CD4-positive, alpha-beta memory T cell (primary cell): ENCODE measurements at regions of chr11 and their contacts with region 1.

Region 1: DNA sequence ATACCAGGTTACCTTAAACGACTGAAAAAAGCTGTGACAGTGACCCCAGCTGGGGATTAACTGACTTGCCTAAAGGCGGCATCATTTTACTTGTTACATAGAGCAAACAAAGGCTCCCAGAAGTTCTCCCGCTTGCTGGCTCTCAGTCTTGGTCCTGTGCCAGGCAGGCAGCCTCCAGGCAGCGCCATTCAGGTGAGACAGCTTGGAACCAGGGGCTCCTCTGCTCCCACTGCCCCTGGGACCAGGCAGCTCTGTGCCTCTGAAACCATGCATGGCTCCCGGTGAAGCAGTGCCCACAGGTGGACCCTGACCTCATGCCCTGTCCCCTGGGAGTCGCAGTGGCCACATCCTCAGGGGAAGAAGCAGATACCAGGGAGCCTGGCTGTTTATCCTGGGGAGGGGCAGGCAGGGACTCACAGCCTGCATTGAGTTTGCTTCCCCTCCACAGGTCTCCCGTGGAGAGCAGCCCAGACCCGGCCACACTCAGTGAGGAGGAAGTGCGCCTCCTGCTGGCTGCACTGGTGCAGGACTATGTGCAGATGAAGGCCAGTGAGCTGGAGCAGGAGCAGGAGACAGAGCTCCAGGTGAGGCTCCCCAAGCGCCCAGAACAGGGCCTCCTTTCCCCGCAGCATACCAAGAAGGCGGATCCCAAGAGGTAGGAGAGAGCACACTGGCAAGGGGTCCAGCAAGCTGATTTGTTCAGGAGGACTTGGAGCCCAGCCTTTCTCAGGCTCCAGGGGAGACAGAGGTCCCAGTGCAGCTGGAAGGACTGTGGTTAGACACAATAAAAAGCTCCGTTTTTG is 15.6 kb upstream of the CYP2R1 start:
- DNase-seq: peak; percentile 74 to 81 (median 76)
- H3K4me3 ChIP-seq: no peak overlapping the region
- H3K4me3 Mint-ChIP-seq: peak overlapping the region in 4 of 8 donors; percentile 21 to 53 (median 40)
- H3K27ac ChIP-seq: no peak overlapping the region
- H3K27ac Mint-ChIP-seq: peak overlapping the region; percentile 6 to 94 (median 69)
- H3K4me1 ChIP-seq: peaks cover 29% of the 10 kb centered on the region
- H3K4me1 Mint-ChIP-seq: peaks cover 22 to 50% (median 34%) of the 10 kb centered on the region in 4 donors
- H3K27me3 ChIP-seq: no peaks in the 10 kb centered on the region
- H3K27me3 Mint-ChIP-seq: no peaks in the 10 kb centered on the region

Region 2: GRCh38 chr11:14308114-14308896 is 599.3 kb before region 1 on chr11:
- CTCF ChIA-PET with region 1: interaction called, 12 read pairs
- POLR2A ChIA-PET with region 1: no interaction called
- intact Hi-C with region 1: no loop called
- DNase-seq: peak in 4 of 5 donors; percentile 20 to 29 (median 24)
- H3K4me3 ChIP-seq: no peak overlapping the region
- H3K4me3 Mint-ChIP-seq: no peak overlapping the region
- H3K27ac ChIP-seq: no peak overlapping the region
- H3K27ac Mint-ChIP-seq: no peak overlapping the region
- H3K4me1 ChIP-seq: peaks cover 23% of the 10 kb centered on the region
- H3K4me1 Mint-ChIP-seq: peaks cover 7 to 12% (median 10%) of the 10 kb centered on the region in 4 donors
- H3K27me3 ChIP-seq: no peaks in the 10 kb centered on the region
- H3K27me3 Mint-ChIP-seq: no peaks in the 10 kb centered on the region

Region 3: GRCh38 chr11:14529933-14530332 is 377.7 kb before region 1 on chr11:
- CTCF ChIA-PET with region 1: interaction called, 57 read pairs
- POLR2A ChIA-PET with region 1: interaction called, 4 read pairs
- intact Hi-C with region 1: no loop called
- DNase-seq: no peak
- H3K4me3 ChIP-seq: no peak overlapping the region
- H3K4me3 Mint-ChIP-seq: no peak overlapping the region
- H3K27ac ChIP-seq: no peak overlapping the region
- H3K27ac Mint-ChIP-seq: peak overlapping the region in 1 of 7 donors; percentile 7
- H3K4me1 ChIP-seq: no peaks in the 10 kb centered on the region
- H3K4me1 Mint-ChIP-seq: no peaks in the 10 kb centered on the region
- H3K27me3 ChIP-seq: no peaks in the 10 kb centered on the region
- H3K27me3 Mint-ChIP-seq: no peaks in the 10 kb centered on the region

Region 4: GRCh38 chr11:14625586-14626205 is 281.9 kb before region 1 on chr11:
- CTCF ChIA-PET with region 1: interaction called, 81 read pairs
- POLR2A ChIA-PET with region 1: interaction called, 5 read pairs
- intact Hi-C with region 1: loop called (anchors 1 kb)
- DNase-seq: no peak
- H3K4me3 ChIP-seq: no peak overlapping the region
- H3K4me3 Mint-ChIP-seq: peak overlapping the region in 4 of 8 donors; percentile 40 to 59 (median 52)
- H3K27ac ChIP-seq: no peak overlapping the region
- H3K27ac Mint-ChIP-seq: peak overlapping the region in 4 of 7 donors; percentile 11 to 62 (median 51)
- H3K4me1 ChIP-seq: peaks cover 33% of the 10 kb centered on the region
- H3K4me1 Mint-ChIP-seq: peaks cover 34 to 64% (median 49%) of the 10 kb centered on the region in 4 donors
- H3K27me3 ChIP-seq: no peaks in the 10 kb centered on the region
- H3K27me3 Mint-ChIP-seq: no peaks in the 10 kb centered on the region

Region 5: GRCh38 chr11:14858404-14858803 is 49.2 kb before region 1 on chr11:
- CTCF ChIA-PET with region 1: interaction called, 19 read pairs
- POLR2A ChIA-PET with region 1: no interaction called
- intact Hi-C with region 1: no loop called
- DNase-seq: no peak
- H3K4me3 ChIP-seq: no peak overlapping the region
- H3K4me3 Mint-ChIP-seq: no peak overlapping the region
- H3K27ac ChIP-seq: no peak overlapping the region
- H3K27ac Mint-ChIP-seq: no peak overlapping the region
- H3K4me1 ChIP-seq: no peaks in the 10 kb centered on the region
- H3K4me1 Mint-ChIP-seq: peaks cover 3 to 9% (median 4%) of the 10 kb centered on the region in 4 donors
- H3K27me3 ChIP-seq: no peaks in the 10 kb centered on the region
- H3K27me3 Mint-ChIP-seq: no peaks in the 10 kb centered on the region

Region 6: DNA sequence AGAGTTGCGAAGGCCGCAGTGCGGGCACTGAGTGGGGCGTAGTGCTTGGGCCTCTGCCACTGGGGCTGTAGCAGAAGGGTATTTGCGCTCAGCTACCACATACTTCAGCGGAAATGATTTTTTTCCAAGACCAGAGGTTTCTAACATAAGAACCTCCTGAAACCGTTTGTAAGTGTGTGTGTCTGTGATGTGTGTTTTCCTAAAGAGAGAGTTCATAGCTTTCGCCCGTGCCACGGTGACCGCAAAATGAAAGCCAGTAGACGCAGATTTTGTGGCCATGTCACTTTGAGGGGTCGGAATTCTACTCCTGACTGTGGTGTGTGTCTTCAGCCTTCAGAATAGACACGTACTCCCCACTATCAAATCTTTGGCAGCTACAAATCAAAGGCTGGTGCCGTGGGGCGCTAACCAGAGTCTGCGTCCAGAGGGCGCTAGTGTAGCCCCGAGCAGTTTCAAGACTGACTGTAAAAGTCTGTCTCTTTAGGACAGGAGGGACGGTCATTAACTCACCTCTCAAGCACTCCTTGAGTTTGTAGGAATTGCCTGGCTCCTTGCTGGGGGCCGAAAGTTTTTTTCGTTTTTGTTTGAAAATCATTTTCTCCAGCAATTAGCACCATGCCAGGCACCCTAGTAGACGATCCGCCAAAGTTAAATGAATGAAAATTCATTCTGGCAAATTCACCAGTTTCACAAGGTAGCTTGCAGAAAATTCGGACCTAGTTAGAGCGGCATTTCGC is 67.1 kb after region 1 on chr11:
- CTCF ChIA-PET with region 1: interaction called, 9 read pairs
- POLR2A ChIA-PET with region 1: no interaction called
- intact Hi-C with region 1: loop called (anchors 2 kb)
- DNase-seq: peak; percentile 42 to 56 (median 52)
- H3K4me3 ChIP-seq: peak overlapping the region; percentile 0 to 1
- H3K4me3 Mint-ChIP-seq: peak overlapping the region; percentile 73 to 88 (median 85)
- H3K27ac ChIP-seq: no peak overlapping the region
- H3K27ac Mint-ChIP-seq: peak overlapping the region in 1 of 7 donors; percentile 30
- H3K4me1 ChIP-seq: peaks cover 28% of the 10 kb centered on the region
- H3K4me1 Mint-ChIP-seq: peaks cover 14 to 39% (median 23%) of the 10 kb centered on the region in 4 donors
- H3K27me3 ChIP-seq: peaks cover 48% of the 10 kb centered on the region
- H3K27me3 Mint-ChIP-seq: peaks cover 44 to 45% of the 10 kb centered on the region in 2 donors

Region 7: GRCh38 chr11:15166204-15166603 is 258.6 kb after region 1 on chr11:
- CTCF ChIA-PET with region 1: no interaction called
- POLR2A ChIA-PET with region 1: no interaction called
- intact Hi-C with region 1: no loop called
- DNase-seq: no peak
- H3K4me3 ChIP-seq: no peak overlapping the region
- H3K4me3 Mint-ChIP-seq: no peak overlapping the region
- H3K27ac ChIP-seq: no peak overlapping the region
- H3K27ac Mint-ChIP-seq: no peak overlapping the region
- H3K4me1 ChIP-seq: no peaks in the 10 kb centered on the region
- H3K4me1 Mint-ChIP-seq: no peaks in the 10 kb centered on the region
- H3K27me3 ChIP-seq: no peaks in the 10 kb centered on the region
- H3K27me3 Mint-ChIP-seq: peaks cover 3 to 6% of the 10 kb centered on the region in 2 donors

Region 8: GRCh38 chr11:15248749-15249148 is 341.1 kb after region 1 on chr11:
- CTCF ChIA-PET with region 1: no interaction called
- POLR2A ChIA-PET with region 1: no interaction called
- intact Hi-C with region 1: no loop called
- DNase-seq: no peak
- H3K4me3 ChIP-seq: no peak overlapping the region
- H3K4me3 Mint-ChIP-seq: no peak overlapping the region
- H3K27ac ChIP-seq: no peak overlapping the region
- H3K27ac Mint-ChIP-seq: no peak overlapping the region
- H3K4me1 ChIP-seq: no peaks in the 10 kb centered on the region
- H3K4me1 Mint-ChIP-seq: no peaks in the 10 kb centered on the region
- H3K27me3 ChIP-seq: no peaks in the 10 kb centered on the region
- H3K27me3 Mint-ChIP-seq: peaks cover 9 to 11% of the 10 kb centered on the region in 2 donors